ENCODE measurements at regions of chr10 and their contacts with region 1.

Region 1: GRCh38 chr10:58384999-58385783 is at the start of gene TFAM:
- DNase-seq: peak; percentile 92 to 97 (median 95)
- ATAC-seq: peak; percentile 80 to 85
- H3K4me3 Mint-ChIP-seq: peak within 1 kb of the TSS; percentile 91 to 100 (median 98)
- H3K27ac Mint-ChIP-seq: peak within 1 kb of the TSS; percentile 90 to 99 (median 97)
- H3K4me1 Mint-ChIP-seq: peaks cover 16 to 58% (median 54%) of the 10 kb centered on the region in 4 donors
- H3K27me3 Mint-ChIP-seq: no peaks in the 10 kb centered on the region
- polyA plus RNA-seq, gene TFAM: 50.3 to 52.7 (median 51.9) TPM

Region 2: DNA sequence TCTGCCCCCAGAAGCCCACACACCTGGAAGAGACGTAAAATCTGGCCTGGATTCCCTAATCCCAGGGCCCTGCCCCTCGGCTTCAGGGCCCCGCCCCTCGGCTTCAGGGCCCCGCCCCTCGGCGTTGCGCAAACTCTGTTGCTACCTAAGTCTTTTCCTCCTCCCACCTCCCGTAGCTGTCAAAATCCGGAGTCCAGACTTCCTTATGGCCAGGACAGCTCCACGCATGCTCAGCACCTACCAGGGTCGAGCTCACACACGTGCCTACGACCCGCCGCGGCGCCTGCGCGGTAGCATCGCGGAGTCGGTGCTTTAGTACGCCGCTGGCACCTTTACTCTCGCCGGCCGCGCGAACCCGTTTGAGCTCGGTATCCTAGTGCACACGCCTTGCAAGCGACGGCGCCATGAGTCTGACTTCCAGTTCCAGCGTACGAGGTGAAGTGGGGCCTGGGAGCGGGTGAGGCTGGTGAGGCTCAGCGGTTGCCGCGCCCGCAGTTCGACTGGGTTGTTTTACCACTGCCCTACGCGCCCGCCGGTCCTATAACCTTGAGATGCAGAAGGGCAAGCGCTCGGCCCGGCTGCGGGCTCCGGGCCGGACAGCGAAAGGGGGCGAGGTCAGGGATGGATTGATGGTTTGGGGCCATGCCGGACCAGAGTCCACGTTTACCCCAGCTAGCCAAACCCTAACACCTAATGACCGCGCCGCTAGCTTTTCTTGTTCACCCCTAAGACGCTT is 116.2 kb before region 1 on chr10 and contains the start of gene CISD1:
- POLR2A ChIA-PET with region 1: interaction called, 39 read pairs
- DNase-seq: peak; percentile 87 to 98 (median 93)
- ATAC-seq: peak; percentile 66 to 71
- H3K4me3 Mint-ChIP-seq: peak within 1 kb of the TSS; percentile 93 to 100 (median 97)
- H3K27ac Mint-ChIP-seq: peak within 1 kb of the TSS; percentile 92 to 99 (median 98)
- H3K4me1 Mint-ChIP-seq: peaks cover 16 to 45% (median 33%) of the 10 kb centered on the region in 4 donors
- H3K27me3 Mint-ChIP-seq: no peaks in the 10 kb centered on the region
- polyA plus RNA-seq, gene CISD1: 54.6 to 71.4 (median 60.4) TPM

Region 3: GRCh38 chr10:58299580-58299979 is 85.6 kb before region 1 on chr10:
- POLR2A ChIA-PET with region 1: interaction called, 15 read pairs
- DNase-seq: peak; percentile 24 to 79 (median 50)
- ATAC-seq: peak; percentile 77 to 90
- H3K4me3 Mint-ChIP-seq: no peak overlapping the region
- H3K27ac Mint-ChIP-seq: no peak overlapping the region
- H3K4me1 Mint-ChIP-seq: peaks cover 0 to 4% (median 1%) of the 10 kb centered on the region in 4 donors
- H3K27me3 Mint-ChIP-seq: peaks cover 10 to 17% (median 13%) of the 10 kb centered on the region in 5 donors

Region 4: DNA sequence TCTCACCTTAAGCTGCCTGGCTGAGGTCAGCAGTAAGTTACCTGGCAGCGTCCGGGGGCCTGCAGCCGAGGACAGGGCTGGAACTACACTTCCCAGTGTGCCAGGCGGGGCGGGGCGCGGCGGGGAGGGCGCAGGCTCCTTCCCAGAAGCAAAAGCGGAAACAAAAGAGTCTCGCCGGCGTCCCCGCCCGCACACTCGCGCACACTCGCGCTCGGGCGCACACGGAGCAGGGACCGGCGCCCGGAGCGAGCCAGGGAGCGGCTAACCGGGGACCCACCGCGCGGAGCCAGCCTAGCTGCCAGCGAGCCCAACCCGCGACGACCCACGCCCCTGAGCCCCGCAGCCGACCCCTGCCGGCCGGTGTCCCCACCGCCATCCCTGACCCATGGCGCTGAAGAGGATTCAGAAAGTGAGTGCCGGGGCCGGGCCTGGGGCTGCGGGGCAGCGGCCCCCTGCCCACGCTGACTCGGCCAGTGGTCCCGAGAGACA is 50.3 kb before region 1 on chr10 and contains the start of gene UBE2D1:
- POLR2A ChIA-PET with region 1: interaction called, 32 read pairs
- DNase-seq: peak; percentile 61 to 88 (median 75)
- ATAC-seq: peak; percentile 95 to 97
- H3K4me3 Mint-ChIP-seq: peak within 1 kb of the TSS; percentile 86 to 95 (median 94)
- H3K27ac Mint-ChIP-seq: peak within 1 kb of the TSS; percentile 79 to 95 (median 85)
- H3K4me1 Mint-ChIP-seq: peaks cover 15 to 41% (median 35%) of the 10 kb centered on the region in 4 donors
- H3K27me3 Mint-ChIP-seq: peaks cover 0 to 6% (median 3%) of the 10 kb centered on the region in 5 donors
- polyA plus RNA-seq, gene UBE2D1: 15.4 to 17.3 (median 17.1) TPM

Region 5: DNA sequence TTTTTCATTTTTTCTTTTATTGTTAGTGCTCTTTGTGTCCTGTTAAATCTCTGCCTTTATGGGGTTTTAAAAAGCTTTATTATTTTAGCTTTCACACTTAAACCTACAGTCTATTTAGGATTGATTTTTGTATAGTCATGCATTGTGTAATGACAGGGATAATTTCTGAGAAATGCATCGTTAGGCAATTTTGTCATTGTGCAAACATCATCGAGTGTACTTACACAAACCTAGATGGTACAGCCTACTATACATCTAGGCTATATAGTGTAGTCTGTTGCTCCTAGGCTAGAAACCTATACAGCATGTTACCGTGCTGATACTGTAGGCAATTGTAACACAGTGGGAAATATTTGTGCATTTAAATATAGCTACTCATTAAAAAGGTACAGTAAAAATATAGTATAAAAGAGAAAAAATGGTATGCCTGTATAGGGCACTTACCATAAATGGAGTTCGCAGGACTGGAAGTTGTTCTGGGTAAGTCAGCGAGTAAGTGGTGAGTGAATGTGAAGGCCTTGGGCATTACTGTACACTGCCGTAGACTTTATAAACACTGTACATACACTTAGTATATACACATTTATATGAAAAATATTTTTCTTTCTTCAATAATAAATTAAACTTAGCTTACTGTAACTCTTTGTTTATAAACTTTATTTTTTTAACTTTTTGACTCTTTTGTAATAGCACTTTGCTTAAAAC is 34.4 kb before region 1 on chr10:
- POLR2A ChIA-PET with region 1: no interaction called
- DNase-seq: no peak
- ATAC-seq: no peak
- H3K4me3 Mint-ChIP-seq: no peak overlapping the region
- H3K27ac Mint-ChIP-seq: no peak overlapping the region
- H3K4me1 Mint-ChIP-seq: peaks cover 22 to 68% (median 47%) of the 10 kb centered on the region in 4 donors
- H3K27me3 Mint-ChIP-seq: no peaks in the 10 kb centered on the region

Region 6: DNA sequence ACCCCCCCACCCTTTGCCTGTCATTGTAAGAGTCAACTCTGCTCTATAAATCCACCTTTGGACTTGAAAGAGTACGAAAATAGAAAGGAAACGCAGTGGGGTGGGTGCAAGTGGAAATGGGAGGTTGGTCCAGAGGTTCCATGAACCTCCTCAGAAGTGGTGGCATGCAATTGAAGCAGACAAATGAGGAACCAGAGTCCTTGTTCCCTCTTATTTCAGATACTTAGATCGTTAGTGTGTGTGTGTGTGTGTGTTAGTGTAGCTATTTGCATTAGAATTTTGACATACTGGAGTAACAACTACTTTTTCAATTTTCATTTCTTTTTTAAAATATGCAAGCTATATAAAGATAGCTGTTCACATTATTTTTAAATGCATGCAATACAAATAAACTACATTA is 18.1 kb before region 1 on chr10:
- POLR2A ChIA-PET with region 1: no interaction called
- DNase-seq: no peak
- ATAC-seq: no peak
- H3K4me3 Mint-ChIP-seq: no peak overlapping the region
- H3K27ac Mint-ChIP-seq: no peak overlapping the region
- H3K4me1 Mint-ChIP-seq: no peaks in the 10 kb centered on the region
- H3K27me3 Mint-ChIP-seq: no peaks in the 10 kb centered on the region

Region 7: GRCh38 chr10:58546722-58547445 is 161.7 kb after region 1 on chr10:
- POLR2A ChIA-PET with region 1: no interaction called
- DNase-seq: no peak
- ATAC-seq: no peak
- H3K4me3 Mint-ChIP-seq: no peak overlapping the region
- H3K27ac Mint-ChIP-seq: no peak overlapping the region
- H3K4me1 Mint-ChIP-seq: no peaks in the 10 kb centered on the region
- H3K27me3 Mint-ChIP-seq: peaks cover 0 to 3% (median 2%) of the 10 kb centered on the region in 5 donors

Measured in naive thymus-derived CD8-positive, alpha-beta T cell (primary cell).